ENCODE measurements at regions of chr3 and their contacts with region 1.

Region 1: DNA sequence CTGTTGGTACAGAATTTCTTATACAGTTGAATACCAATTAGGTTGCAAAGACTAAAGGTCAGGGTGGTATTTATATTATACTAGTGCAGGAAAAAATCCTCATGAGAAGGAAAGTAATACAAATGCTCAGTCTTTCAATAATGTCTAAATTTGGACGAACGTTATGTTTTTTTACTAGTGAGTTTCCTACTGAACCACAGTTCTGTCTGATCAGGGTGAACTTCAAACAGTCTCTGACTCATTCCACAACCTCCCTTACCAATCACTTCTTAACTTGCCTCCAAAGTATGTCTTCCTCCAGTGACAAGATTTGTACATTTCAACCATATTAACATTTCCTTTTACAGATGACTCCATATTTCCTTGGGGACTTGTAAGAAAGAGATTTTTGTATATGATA is 3.4 kb downstream of the TMEM212 start:
- DNase-seq: peak; percentile 80
- ATAC-seq: peak; percentile 97
- H3K4me3 ChIP-seq: no peak overlapping the region
- H3K27ac ChIP-seq: no peak overlapping the region
- H3K4me1 ChIP-seq: peaks cover 13% of the 10 kb centered on the region
- H3K27me3 ChIP-seq: no peaks in the 10 kb centered on the region
- CTCF ChIP-seq: no peak
- EP300 ChIP-seq: peak; percentile 57 to 78; a peak in 2 of 4 replicates
- POLR2A ChIP-seq: no peak
- RAD21 ChIP-seq: no peak

Region 2: GRCh38 chr3:172270557-172271166 is 424.1 kb after region 1 on chr3:
- CTCF ChIA-PET with region 1: no interaction called
- POLR2A ChIA-PET with region 1: no interaction called
- RAD21 ChIA-PET with region 1: no interaction called
- SMC1A ChIA-PET with region 1: no interaction called
- in situ Hi-C with region 1: no loop called
- intact Hi-C with region 1: loop called (anchors 10 kb)
- DNase-seq: peak; percentile 66
- ATAC-seq: peak; percentile 99
- H3K4me3 ChIP-seq: no peak overlapping the region
- H3K27ac ChIP-seq: no peak overlapping the region
- H3K4me1 ChIP-seq: peaks cover 19% of the 10 kb centered on the region
- H3K27me3 ChIP-seq: no peaks in the 10 kb centered on the region
- CTCF ChIP-seq: no peak
- EP300 ChIP-seq: peak in 1 of 2 experiments; percentile 82; a peak in 2 of 4 replicates
- POLR2A ChIP-seq: no peak
- RAD21 ChIP-seq: no peak

Measured in GM12878 (cell line).